ENCODE measurements at regions of chr2 and their contacts with region 1.

Region 1: GRCh38 chr2:173402405-173402974 is 47.8 kb downstream of the CDCA7 start:
- DNase-seq: peak; percentile 65
- H3K4me3 ChIP-seq: peak overlapping the region; percentile 23 to 33 (median 26)
- H3K27ac ChIP-seq: no peak overlapping the region
- H3K4me1 ChIP-seq: peaks cover 17% of the 10 kb centered on the region
- H3K27me3 ChIP-seq: no peaks in the 10 kb centered on the region
- CTCF ChIP-seq: peak; percentile 78 to 92

Region 2: GRCh38 chr2:172977270-172978062 is 425.0 kb before region 1 on chr2:
- CTCF ChIA-PET with region 1: no interaction called
- dilution Hi-C with region 1: no loop called
- in situ Hi-C with region 1: no loop called
- intact Hi-C with region 1: loop called (anchors 2 kb)
- DNase-seq: no peak
- H3K4me3 ChIP-seq: no peak overlapping the region
- H3K27ac ChIP-seq: no peak overlapping the region
- H3K4me1 ChIP-seq: no peaks in the 10 kb centered on the region
- H3K27me3 ChIP-seq: no peaks in the 10 kb centered on the region
- CTCF ChIP-seq: peak in 1 of 2 donors; percentile 37

Region 3: DNA sequence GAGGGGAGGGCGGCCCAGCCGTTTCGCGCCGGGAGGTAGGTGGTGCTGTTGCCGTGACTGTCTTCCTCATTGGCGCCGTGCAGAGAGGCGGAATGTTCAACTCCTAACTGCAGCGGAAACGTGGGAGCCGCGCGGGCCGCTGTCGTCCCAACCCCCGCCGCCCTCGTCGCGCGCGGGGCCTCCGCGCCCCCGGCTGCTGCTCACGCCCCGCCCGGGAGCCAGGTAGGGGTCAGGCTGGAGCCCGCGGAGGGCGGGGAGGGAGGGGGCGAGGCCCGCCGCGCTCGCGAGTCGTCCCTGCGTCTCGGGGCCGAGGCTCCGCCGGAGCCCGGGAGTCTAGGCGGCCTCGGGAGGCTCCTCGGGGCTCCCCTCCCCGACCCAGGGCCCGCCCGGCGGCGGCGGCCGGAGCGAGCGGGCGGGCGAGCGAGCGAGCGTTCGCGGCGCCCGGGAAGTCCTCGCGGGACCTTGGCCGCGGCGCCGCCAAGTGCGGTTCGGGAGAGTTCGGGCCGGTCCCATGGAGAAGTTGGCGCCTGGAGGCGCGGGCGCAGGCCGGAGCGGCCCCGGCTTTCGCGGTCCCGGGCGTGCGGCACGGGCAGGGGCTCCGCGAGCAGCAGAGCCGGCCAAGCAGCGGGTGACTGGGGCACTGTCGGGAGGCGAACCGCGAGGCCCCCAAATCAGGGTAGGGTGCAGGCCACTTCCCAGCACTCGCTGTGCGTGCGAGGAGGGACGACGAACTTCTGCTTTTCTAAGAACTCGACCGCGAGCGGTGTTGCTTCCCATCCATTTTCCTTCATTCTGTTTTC is 326.5 kb before region 1 on chr2 and contains the start of gene MAP3K20:
- CTCF ChIA-PET with region 1: no interaction called
- dilution Hi-C with region 1: no loop called
- in situ Hi-C with region 1: no loop called
- intact Hi-C with region 1: loop called (anchors 2 kb)
- DNase-seq: peak; percentile 65
- H3K4me3 ChIP-seq: peak within 1 kb of the TSS; percentile 66 to 88 (median 84)
- H3K27ac ChIP-seq: peak within 1 kb of the TSS; percentile 95
- H3K4me1 ChIP-seq: peaks cover 35% of the 10 kb centered on the region
- H3K27me3 ChIP-seq: no peaks in the 10 kb centered on the region
- CTCF ChIP-seq: peak in 1 of 2 donors; percentile 58
- total RNA-seq, gene MAP3K20: 31.8 to 109 TPM

Region 4: GRCh38 chr2:173427887-173428600 is 25.6 kb after region 1 on chr2:
- CTCF ChIA-PET with region 1: no interaction called
- dilution Hi-C with region 1: no loop called
- in situ Hi-C with region 1: no loop called
- intact Hi-C with region 1: loop called (anchors 1 kb)
- DNase-seq: peak; percentile 96
- H3K4me3 ChIP-seq: no peak overlapping the region
- H3K27ac ChIP-seq: peak overlapping the region; percentile 69
- H3K4me1 ChIP-seq: peaks cover 21% of the 10 kb centered on the region
- H3K27me3 ChIP-seq: peaks cover 12% of the 10 kb centered on the region
- CTCF ChIP-seq: no peak

Region 5: DNA sequence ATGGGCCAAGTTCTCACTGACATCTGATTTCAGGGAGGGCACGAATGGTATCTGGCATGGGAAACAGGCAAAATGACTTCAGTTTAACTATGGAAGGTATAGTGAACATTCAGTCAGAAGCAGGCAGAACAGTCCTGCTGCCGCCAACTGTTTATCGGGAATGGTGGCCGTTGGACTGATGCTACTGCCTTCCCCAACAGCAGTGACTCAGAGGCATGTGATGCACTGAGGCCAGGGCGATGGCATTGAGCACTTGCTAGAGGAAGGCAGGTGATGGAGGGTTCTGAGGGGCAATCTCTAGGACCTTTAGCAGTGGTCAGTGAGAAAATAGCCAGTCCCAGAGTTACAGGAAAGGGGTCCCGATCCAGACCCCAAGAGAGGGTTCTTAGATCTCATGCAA is 101.9 kb after region 1 on chr2:
- CTCF ChIA-PET with region 1: no interaction called
- dilution Hi-C with region 1: no loop called
- in situ Hi-C with region 1: no loop called
- intact Hi-C with region 1: no loop called
- DNase-seq: no peak
- H3K4me3 ChIP-seq: no peak overlapping the region
- H3K27ac ChIP-seq: no peak overlapping the region
- H3K4me1 ChIP-seq: no peaks in the 10 kb centered on the region
- H3K27me3 ChIP-seq: peaks cover 7% of the 10 kb centered on the region
- CTCF ChIP-seq: no peak

Region 6: GRCh38 chr2:173652767-173653431 is 250.4 kb after region 1 on chr2:
- CTCF ChIA-PET with region 1: interaction called, 7 read pairs
- dilution Hi-C with region 1: no loop called
- in situ Hi-C with region 1: loop called in 1 of 2 experiments (anchors 25 kb)
- intact Hi-C with region 1: no loop called
- DNase-seq: peak; percentile 98
- H3K4me3 ChIP-seq: no peak overlapping the region
- H3K27ac ChIP-seq: peak overlapping the region; percentile 98
- H3K4me1 ChIP-seq: peaks cover 44% of the 10 kb centered on the region
- H3K27me3 ChIP-seq: no peaks in the 10 kb centered on the region
- CTCF ChIP-seq: no peak

Region 7: GRCh38 chr2:174039551-174040416 is 637.3 kb after region 1 on chr2:
- CTCF ChIA-PET with region 1: no interaction called
- dilution Hi-C with region 1: no loop called
- in situ Hi-C with region 1: no loop called
- intact Hi-C with region 1: loop called (anchors 5 kb)
- DNase-seq: peak; percentile 90
- H3K4me3 ChIP-seq: peak overlapping the region in 1 of 3 experiments; percentile 14
- H3K27ac ChIP-seq: peak overlapping the region; percentile 69
- H3K4me1 ChIP-seq: peaks cover 17% of the 10 kb centered on the region
- H3K27me3 ChIP-seq: no peaks in the 10 kb centered on the region
- CTCF ChIP-seq: peak; percentile 80 to 93